ENCODE measurements at regions of chr12 and their contacts with region 1.

Region 1: GRCh38 chr12:9858135-9858534 is 11.0 kb downstream of the CLEC2B start:
- DNase-seq: no peak
- ATAC-seq: no peak
- H3K4me3 ChIP-seq: no peak overlapping the region
- H3K4me3 Mint-ChIP-seq: no peak overlapping the region
- H3K27ac ChIP-seq: no peak overlapping the region
- H3K27ac Mint-ChIP-seq: no peak overlapping the region
- H3K4me1 ChIP-seq: peaks cover 37% of the 10 kb centered on the region
- H3K4me1 Mint-ChIP-seq: peaks cover 84% of the 10 kb centered on the region
- H3K27me3 ChIP-seq: no peaks in the 10 kb centered on the region
- H3K27me3 Mint-ChIP-seq: no peaks in the 10 kb centered on the region
- CTCF ChIP-seq: no peak

Region 2: GRCh38 chr12:9843416-9843815 is 14.7 kb before region 1 on chr12:
- CTCF ChIA-PET with region 1: interaction called, 3 read pairs
- POLR2A ChIA-PET with region 1: no interaction called
- intact Hi-C with region 1: loop called in 1 of 2 experiments (anchors 2 kb)
- DNase-seq: no peak
- ATAC-seq: no peak
- H3K4me3 ChIP-seq: no peak overlapping the region
- H3K4me3 Mint-ChIP-seq: no peak overlapping the region
- H3K27ac ChIP-seq: no peak overlapping the region
- H3K27ac Mint-ChIP-seq: no peak overlapping the region
- H3K4me1 ChIP-seq: no peaks in the 10 kb centered on the region
- H3K4me1 Mint-ChIP-seq: no peaks in the 10 kb centered on the region
- H3K27me3 ChIP-seq: no peaks in the 10 kb centered on the region
- H3K27me3 Mint-ChIP-seq: no peaks in the 10 kb centered on the region
- CTCF ChIP-seq: no peak